ENCODE measurements at regions of chr12 and their contacts with region 1.

Region 1: DNA sequence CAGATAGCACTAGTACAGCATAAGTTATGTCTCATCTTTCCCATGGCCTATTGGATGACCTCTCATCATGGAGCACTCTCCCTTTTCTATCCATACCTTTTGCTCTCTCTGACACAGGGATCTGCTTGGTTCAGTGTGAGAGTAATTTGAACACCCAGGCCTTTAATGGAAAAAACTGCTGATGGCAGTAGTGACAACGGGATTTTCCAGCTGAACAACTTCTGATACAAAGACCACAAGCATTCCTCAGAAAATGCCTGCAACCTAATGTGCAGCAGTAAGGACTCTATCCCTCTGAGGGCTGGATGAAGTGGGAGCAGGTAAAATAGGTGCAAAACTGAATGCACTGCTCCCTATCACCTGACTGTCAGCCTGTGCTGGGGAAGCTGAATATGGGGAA is 51.0 kb downstream of the KANSL2 start:
- DNase-seq: no peak
- ATAC-seq: no peak
- H3K4me3 ChIP-seq: no peak overlapping the region
- H3K27ac ChIP-seq: no peak overlapping the region
- H3K4me1 ChIP-seq: no peaks in the 10 kb centered on the region
- H3K27me3 ChIP-seq: no peaks in the 10 kb centered on the region
- CTCF ChIP-seq: no peak
- POLR2A ChIP-seq: no peak

Region 2: GRCh38 chr12:48061948-48062719 is 568.9 kb before region 1 on chr12:
- in situ Hi-C with region 1: loop called in 1 of 4 experiments (anchors 25 kb)
- intact Hi-C with region 1: no loop called
- DNase-seq: no peak
- ATAC-seq: no peak
- H3K4me3 ChIP-seq: no peak overlapping the region
- H3K27ac ChIP-seq: no peak overlapping the region
- H3K4me1 ChIP-seq: no peaks in the 10 kb centered on the region
- H3K27me3 ChIP-seq: no peaks in the 10 kb centered on the region
- CTCF ChIP-seq: no peak
- POLR2A ChIP-seq: no peak

Region 3: DNA sequence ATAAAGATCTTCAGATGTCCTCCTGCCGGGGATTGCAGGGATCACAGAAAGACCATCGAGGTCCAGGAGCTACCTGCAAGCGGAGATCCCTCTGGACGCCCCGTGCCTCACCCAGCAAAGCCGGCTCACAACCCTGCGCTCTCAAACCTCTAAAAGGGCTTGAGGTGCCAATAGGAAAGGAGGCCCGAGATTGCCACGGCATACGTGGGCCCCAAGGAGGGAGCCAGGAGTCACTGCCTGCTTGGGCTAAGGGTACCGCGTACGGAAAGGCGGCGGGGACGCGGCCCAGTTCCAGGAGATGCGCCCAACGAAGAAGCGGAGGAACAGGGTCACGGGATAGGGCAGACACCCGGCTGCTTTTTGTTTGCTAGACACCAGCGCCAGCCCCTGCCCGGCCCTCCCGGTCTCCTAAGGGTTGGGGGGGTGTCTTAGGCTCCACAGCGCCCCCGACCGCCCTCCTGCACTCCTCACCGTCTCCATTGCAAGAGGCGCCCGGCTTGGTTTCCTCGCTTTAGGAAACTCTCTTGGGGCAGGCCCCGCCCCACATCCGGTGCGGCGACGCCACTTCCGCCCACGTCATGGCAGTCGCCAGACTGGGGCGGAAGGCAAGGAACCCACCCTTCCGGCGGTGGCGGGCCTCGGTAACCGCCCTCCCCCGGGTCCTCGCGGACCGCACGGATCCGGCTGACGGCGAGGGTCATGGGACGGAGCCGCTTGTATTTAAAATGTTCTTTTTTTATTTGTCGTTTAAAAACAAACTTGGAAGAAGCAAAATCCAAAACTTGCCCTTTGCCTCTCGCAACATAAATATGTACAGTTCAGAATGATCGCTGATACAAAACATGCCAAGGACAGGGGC is 387.4 kb after region 1 on chr12 and contains the start of gene PRKAG1:
- in situ Hi-C with region 1: no loop called
- intact Hi-C with region 1: no loop called
- DNase-seq: peak; percentile 92 to 96
- ATAC-seq: peak; percentile 74 to 82
- H3K4me3 ChIP-seq: peak within 1 kb of the TSS; percentile 79 to 98 (median 89)
- H3K27ac ChIP-seq: peak within 1 kb of the TSS; percentile 96 to 99 (median 98)
- H3K4me1 ChIP-seq: peaks cover 37 to 43% of the 10 kb centered on the region in 2 donors
- H3K27me3 ChIP-seq: no peaks in the 10 kb centered on the region
- CTCF ChIP-seq: peak in 3 of 5 experiments; percentile 34 to 49 (median 41)
- POLR2A ChIP-seq: peak; percentile 89 to 95
- total RNA-seq, gene PRKAG1: 67.4 to 97.7 (median 83.9) TPM

Measured in gastrocnemius medialis (tissue), 4 donors.